ENCODE measurements at regions of chr19 and their contacts with region 1.

Region 1: DNA sequence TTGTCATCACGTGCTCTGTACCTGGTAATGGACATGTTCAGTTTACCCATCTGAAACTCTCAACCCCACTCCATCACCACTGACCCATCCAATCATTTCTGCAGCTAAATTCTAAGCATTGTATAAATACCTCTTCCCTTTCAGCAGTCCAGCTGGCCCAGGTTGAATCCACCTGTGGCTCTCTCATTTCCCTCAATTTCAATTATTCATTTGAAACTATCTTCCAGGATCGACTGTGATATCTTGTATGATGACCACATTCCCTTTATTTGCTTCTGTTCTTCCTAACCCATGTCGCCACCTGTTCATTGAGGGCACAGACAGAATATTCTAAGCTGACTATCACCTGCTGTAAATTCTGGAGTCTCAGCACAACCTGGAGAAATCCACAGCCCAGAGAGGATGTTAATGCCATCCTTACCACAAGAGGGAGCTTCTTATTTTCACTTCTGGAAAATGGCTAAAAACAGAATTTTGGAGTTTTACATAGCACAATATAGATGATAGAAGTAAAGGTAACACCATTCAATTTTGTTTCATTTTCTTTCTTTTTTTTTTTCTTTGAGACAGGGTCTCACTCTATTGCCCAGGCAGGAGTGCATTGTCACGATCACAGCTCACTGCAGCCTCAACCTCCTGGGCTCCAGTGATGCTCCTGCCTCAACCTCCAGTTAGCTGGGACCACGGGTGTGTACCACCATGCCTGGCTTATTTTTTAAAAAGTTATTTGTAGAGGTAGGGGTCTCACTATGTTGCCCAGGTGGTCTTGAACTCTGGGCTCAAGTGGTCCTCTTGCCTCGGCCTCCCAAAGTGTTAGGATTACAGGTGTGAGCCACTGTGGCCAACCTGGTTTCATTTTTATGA is 38.6 kb downstream of the ZNF823 start:
- H3K4me3 ChIP-seq: no peak overlapping the region
- H3K27ac ChIP-seq: no peak overlapping the region
- H3K4me1 ChIP-seq: no peaks in the 10 kb centered on the region
- CTCF ChIP-seq: peak; percentile 7; the same call in 1 of the 2 replicates

Region 2: DNA sequence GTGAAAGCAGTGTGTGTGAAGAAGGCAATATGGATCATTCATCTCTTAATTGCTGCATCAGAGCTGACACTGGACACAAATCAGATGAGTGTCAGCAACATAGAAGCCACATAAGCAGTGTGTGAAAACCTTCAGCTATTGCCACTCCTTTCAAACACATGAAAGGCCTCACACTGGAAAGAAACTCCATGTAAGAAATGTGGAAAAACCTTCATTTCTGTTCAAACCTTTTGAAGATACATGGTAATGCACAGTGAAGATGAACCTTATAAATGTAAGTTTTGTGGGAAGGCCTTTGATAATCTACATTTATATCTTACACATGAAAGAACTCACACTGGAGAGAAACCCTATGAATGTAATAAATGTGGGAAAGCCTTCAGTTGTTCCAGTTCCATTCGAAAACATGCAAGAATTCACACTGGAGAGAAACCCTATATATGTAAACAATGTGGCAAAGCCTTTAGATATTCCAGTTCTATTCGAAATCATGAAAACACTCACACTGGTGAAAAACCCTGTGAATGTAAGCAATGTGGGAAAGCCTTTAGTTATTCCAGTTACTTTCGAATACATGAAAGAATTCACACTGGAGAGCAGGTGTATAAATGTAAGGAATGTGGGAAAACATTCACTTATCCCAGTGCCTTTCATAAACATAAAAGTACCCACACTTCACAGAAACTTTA is 15.0 kb before region 1 on chr19:
- CTCF ChIA-PET with region 1: interaction called, 10 read pairs
- POLR2A ChIA-PET with region 1: no interaction called
- H3K4me3 ChIP-seq: no peak overlapping the region
- H3K27ac ChIP-seq: no peak overlapping the region
- H3K4me1 ChIP-seq: no peaks in the 10 kb centered on the region
- CTCF ChIP-seq: no peak